ENCODE measurements at regions of chr2 and their contacts with region 1.

Region 1: DNA sequence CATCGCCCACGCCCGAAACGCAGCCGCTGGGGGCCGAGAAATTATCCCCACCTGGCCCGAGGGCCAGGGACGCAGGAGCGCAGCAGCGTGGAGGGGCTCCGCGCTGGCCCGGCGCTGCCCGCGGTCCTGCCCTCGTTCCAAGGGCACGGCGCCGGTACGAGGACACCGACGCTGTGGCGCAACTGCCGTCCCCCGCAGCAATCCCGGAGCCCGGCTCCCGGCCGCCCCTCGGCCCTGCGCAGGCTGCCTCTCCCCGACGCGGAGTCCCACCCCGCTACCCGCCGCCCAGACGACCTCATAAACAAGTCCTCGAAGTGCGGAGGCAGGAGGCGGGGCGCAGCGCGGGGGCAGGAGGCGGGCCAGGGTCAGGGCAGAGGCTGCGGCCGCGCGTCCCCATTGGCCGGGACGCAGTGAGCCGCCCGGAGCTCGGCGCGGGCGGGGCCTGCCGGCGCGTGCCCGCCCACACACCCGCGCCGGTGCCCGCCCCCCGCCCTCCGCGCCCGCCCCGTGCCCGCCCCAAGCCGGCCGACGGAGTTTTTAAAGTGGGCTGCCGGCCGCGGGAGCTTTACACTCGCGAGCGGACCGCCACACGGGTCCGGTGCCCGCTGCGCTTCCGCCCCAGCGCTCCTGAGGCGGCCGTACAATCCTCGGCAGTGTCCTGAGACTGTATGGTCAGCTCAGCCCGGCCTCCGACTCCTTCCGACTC is at the start of gene EPAS1:
- DNase-seq: peak; percentile 96
- H3K4me3 Mint-ChIP-seq: peak within 1 kb of the TSS; percentile 87
- H3K27ac Mint-ChIP-seq: peak within 1 kb of the TSS; percentile 66
- H3K4me1 Mint-ChIP-seq: peaks cover 26% of the 10 kb centered on the region
- H3K27me3 Mint-ChIP-seq: peaks cover 65% of the 10 kb centered on the region
- total RNA-seq, gene EPAS1: 16.2 and 19.4 TPM in 2 replicates

Region 2: DNA sequence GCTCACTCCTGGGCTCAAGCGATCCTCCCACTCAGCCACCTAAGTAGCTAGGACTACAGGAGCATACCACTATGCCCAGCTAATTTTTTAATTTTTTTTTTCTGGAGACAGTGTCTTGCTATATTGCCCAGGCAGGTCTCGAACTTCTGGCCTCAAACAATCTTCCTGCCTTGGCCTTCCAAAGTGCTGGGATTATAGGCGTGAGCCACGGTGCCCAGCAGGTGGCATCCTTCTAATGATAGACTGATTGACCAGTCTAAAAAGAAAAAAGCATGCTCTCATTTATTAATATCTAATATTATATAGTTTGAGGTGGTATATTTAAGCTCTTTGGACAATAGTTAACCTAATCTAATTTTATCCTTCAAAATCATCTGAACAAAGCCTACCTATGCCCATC is 1736.6 kb before region 1 on chr2:
- intact Hi-C with region 1: no loop called
- DNase-seq: no peak
- H3K4me3 Mint-ChIP-seq: no peak overlapping the region
- H3K27ac Mint-ChIP-seq: no peak overlapping the region
- H3K4me1 Mint-ChIP-seq: no peaks in the 10 kb centered on the region
- H3K27me3 Mint-ChIP-seq: no peaks in the 10 kb centered on the region

Region 3: DNA sequence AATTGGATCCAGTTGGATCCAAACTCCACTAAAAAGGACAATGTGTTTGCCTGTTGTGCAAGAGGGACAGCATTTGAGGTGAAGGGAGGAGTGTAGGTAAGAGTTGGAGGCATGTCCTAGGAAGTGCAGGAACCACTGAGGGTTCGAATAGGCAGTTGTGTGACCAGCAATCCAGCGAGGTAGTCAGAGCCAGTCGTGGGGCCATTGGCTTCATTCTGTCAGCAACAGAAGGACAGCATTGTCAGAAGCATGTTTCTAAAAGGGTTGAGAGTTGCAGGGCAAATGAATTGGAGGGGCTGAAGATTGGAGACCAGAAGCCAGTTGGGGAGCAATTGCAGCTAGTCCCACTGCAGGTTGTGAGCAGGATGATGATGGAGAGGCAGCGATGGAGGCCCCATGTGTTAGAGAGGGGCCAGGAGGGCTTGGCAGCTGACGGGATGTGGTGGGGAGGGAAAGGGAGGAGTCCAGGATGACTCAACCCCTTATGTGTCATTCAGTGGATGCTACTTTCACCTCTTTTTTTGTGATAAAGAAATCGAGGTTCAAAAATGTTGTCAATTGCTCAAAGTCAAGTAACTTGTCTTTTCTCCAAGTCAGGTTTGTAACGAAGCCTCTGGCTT is 1452.2 kb before region 1 on chr2:
- intact Hi-C with region 1: no loop called
- DNase-seq: peak; percentile 50
- H3K4me3 Mint-ChIP-seq: no peak overlapping the region
- H3K27ac Mint-ChIP-seq: no peak overlapping the region
- H3K4me1 Mint-ChIP-seq: no peaks in the 10 kb centered on the region
- H3K27me3 Mint-ChIP-seq: peaks cover 6% of the 10 kb centered on the region

Region 4: GRCh38 chr2:46010925-46011490 is 286.0 kb before region 1 on chr2:
- intact Hi-C with region 1: loop called (anchors 5 kb)
- DNase-seq: no peak
- H3K4me3 Mint-ChIP-seq: no peak overlapping the region
- H3K27ac Mint-ChIP-seq: no peak overlapping the region
- H3K4me1 Mint-ChIP-seq: peaks cover 16% of the 10 kb centered on the region
- H3K27me3 Mint-ChIP-seq: no peaks in the 10 kb centered on the region

Region 5: DNA sequence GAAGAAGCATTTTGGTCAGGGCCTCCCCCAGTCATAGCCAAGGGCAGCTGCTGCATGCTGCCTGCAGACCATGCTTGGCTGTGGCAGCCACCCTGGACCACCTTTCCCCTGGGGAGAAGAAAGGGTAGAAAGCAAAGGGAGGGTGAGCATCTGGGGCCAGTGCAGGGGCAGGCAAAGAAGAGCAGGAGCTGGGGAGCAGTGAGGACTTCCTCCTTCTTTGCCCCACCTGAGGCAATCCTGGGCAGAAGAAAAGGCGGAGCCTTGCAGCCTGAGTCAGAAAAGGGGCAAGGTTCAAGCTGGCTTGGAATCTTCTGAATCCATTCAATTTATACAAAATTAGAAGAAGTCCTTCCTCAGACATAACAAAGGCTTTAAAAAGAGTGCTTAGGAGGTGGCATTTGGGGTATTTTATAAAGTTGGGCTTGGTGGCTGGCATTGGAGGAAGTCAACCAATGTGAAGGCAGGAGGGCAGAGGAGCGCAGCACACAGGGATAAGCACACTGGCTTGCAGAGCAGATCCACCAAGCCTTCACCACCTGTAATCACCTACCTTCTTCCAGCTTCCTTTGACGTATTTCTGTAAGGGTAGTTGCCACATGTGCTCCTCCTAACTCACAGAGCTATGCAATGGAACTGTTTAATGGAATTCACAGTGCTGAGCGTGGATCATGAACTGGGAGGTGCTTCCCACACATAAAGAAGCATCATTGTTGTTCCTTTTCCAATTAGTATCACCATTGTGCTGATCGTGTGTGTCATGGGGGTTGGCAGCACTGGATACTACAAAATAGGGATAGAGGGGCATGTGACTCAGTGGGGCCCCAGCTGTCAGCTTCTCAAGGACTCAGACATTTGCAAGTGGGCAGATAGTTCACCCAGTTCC is 154.2 kb before region 1 on chr2:
- intact Hi-C with region 1: no loop called
- DNase-seq: no peak
- H3K4me3 Mint-ChIP-seq: no peak overlapping the region
- H3K27ac Mint-ChIP-seq: no peak overlapping the region
- H3K4me1 Mint-ChIP-seq: peaks cover 26% of the 10 kb centered on the region
- H3K27me3 Mint-ChIP-seq: no peaks in the 10 kb centered on the region

Region 6: DNA sequence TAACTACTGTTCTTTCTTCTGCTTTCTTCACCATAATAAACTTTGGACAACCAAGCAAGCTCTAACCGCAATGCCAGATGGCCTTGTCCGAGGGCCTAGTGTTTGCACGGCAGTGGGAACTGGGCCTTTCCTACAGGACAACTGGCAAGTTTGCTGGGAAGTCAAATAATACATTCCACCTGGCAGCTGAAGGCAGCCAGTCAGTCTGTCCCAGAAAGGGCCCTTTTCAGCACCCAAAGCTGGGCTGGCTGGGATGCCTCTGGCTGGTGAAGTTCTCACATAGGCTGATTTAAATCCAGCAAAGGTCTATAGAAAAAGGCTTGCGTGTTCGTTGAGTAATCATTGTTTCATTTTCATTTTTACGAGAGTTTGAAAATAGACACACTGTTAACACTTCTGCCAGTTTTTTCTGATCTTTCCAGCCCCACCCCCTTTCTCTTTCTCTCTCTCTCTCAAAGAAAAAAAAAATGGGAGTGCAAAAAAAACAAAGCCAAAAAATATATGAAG is 109.8 kb before region 1 on chr2:
- intact Hi-C with region 1: loop called (anchors 2 kb)
- DNase-seq: peak; percentile 84
- H3K4me3 Mint-ChIP-seq: peak overlapping the region; percentile 80
- H3K27ac Mint-ChIP-seq: peak overlapping the region; percentile 88
- H3K4me1 Mint-ChIP-seq: peaks cover 13% of the 10 kb centered on the region
- H3K27me3 Mint-ChIP-seq: peaks cover 2% of the 10 kb centered on the region

Region 7: GRCh38 chr2:46257476-46257875 is 39.5 kb before region 1 on chr2:
- intact Hi-C with region 1: no loop called
- DNase-seq: no peak
- H3K4me3 Mint-ChIP-seq: no peak overlapping the region
- H3K27ac Mint-ChIP-seq: no peak overlapping the region
- H3K4me1 Mint-ChIP-seq: peaks cover 1% of the 10 kb centered on the region
- H3K27me3 Mint-ChIP-seq: peaks cover 8% of the 10 kb centered on the region

Region 8: DNA sequence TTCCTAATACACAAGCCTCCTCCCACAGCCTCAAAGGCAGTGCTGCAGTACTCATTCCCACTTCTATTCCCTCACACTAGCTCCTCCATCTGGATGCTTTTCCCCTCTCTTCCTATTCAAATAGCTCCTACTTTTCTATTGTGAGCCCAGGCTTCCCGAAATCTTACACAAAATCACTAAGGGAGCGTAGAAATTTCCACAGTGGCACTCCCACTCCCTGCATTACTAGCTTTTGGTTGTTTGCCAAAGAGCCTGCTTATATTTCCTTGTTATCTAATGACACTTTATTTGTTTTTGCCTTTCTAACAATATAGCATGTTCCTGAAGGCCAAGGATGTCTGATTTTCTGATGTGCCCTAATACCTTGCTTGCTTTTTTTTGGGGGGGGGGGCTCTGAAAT is 11.1 kb after region 1 on chr2:
- intact Hi-C with region 1: loop called (anchors 1 kb)
- DNase-seq: no peak
- H3K4me3 Mint-ChIP-seq: no peak overlapping the region
- H3K27ac Mint-ChIP-seq: no peak overlapping the region
- H3K4me1 Mint-ChIP-seq: peaks cover 26% of the 10 kb centered on the region
- H3K27me3 Mint-ChIP-seq: peaks cover 59% of the 10 kb centered on the region

Region 9: GRCh38 chr2:46364797-46365457 is 67.9 kb after region 1 on chr2:
- intact Hi-C with region 1: loop called (anchors 2 kb)
- DNase-seq: peak; percentile 83
- H3K4me3 Mint-ChIP-seq: no peak overlapping the region
- H3K27ac Mint-ChIP-seq: no peak overlapping the region
- H3K4me1 Mint-ChIP-seq: peaks cover 36% of the 10 kb centered on the region
- H3K27me3 Mint-ChIP-seq: peaks cover 6% of the 10 kb centered on the region